SK-N-SH (cell line): ENCODE measurements at regions of chr12 and their contacts with region 1.

Region 1: DNA sequence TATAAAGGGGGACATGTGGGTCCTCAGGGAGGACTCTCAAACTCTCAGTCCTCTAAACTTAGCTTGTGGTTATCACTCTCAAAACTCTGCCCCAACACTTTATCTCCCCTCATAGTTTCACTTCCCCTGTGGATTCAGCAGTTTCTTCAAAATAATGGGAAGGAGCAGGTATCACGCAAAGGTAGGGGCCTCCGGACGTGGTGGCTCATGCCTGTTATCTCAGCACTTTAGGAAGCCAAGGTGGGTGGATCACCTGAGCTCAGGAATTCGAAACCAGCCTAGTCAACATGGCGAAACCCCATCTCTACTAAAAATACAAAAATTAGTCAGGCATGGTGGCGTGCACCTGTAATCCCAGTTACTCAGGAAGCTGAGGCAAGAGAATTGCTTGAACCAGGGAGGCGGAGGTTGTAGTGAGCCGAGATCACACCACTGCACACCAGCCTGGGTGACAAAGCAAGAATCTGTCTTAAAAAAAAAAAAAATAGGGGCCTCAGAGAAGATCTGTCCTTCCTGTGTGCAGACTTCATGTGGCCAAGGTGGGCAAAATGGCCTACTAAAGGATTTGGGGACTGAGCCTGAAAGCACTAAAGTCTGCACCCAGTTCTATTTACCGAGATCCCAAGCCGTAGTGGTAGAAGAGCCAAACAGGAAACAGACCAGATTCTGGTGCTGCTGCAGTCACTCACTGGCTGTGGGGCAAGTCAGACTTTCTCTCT is 6.4 kb downstream of the ITGB7 start:
- DNase-seq: no peak
- H3K4me3 ChIP-seq: no peak overlapping the region
- H3K27ac ChIP-seq: peak overlapping the region in 1 of 2 experiments; percentile 46; a peak in 1 of 4 replicates
- H3K4me1 ChIP-seq: no peaks in the 10 kb centered on the region
- H3K27me3 ChIP-seq: no peaks in the 10 kb centered on the region
- CTCF ChIP-seq: no peak
- EP300 ChIP-seq: no peak
- RAD21 ChIP-seq: no peak

Region 2: GRCh38 chr12:53174881-53175491 is 25.6 kb before region 1 on chr12:
- CTCF ChIA-PET with region 1: interaction called, 40 read pairs
- POLR2A ChIA-PET with region 1: no interaction called
- DNase-seq: no peak
- H3K4me3 ChIP-seq: no peak overlapping the region
- H3K27ac ChIP-seq: peak overlapping the region in 1 of 2 experiments; percentile 3; a peak in 2 of 4 replicates
- H3K4me1 ChIP-seq: peaks cover 19 to 22% of the 10 kb centered on the region in 2 experiments; a peak in 3 of 4 replicates
- H3K27me3 ChIP-seq: no peaks in the 10 kb centered on the region
- CTCF ChIP-seq: peak; percentile 53
- EP300 ChIP-seq: no peak
- RAD21 ChIP-seq: peak; percentile 52

Region 3: GRCh38 chr12:53180220-53180930 is 20.2 kb before region 1 on chr12 and contains the starts of genes CSAD and ZNF740:
- CTCF ChIA-PET with region 1: interaction called, 40 read pairs
- POLR2A ChIA-PET with region 1: no interaction called
- DNase-seq: peak; percentile 98
- H3K4me3 ChIP-seq: peak within 1 kb of the TSS; percentile 77 to 78
- H3K27ac ChIP-seq: peak within 1 kb of the TSS; percentile 89 to 97
- H3K4me1 ChIP-seq: peaks cover 17 to 27% of the 10 kb centered on the region in 2 experiments; a peak in 3 of 4 replicates
- H3K27me3 ChIP-seq: no peaks in the 10 kb centered on the region
- CTCF ChIP-seq: no peak
- EP300 ChIP-seq: 0 out of 4 replicates have a peak, but pooled peaks of 1 of the 2 experiments have one; percentile 6
- RAD21 ChIP-seq: no peak
- polyA plus RNA-seq, gene CSAD: 32.2 and 45.4 TPM in 2 replicates
- polyA plus RNA-seq, gene ZNF740: 14.6 and 21.8 TPM in 2 replicates

Region 4: DNA sequence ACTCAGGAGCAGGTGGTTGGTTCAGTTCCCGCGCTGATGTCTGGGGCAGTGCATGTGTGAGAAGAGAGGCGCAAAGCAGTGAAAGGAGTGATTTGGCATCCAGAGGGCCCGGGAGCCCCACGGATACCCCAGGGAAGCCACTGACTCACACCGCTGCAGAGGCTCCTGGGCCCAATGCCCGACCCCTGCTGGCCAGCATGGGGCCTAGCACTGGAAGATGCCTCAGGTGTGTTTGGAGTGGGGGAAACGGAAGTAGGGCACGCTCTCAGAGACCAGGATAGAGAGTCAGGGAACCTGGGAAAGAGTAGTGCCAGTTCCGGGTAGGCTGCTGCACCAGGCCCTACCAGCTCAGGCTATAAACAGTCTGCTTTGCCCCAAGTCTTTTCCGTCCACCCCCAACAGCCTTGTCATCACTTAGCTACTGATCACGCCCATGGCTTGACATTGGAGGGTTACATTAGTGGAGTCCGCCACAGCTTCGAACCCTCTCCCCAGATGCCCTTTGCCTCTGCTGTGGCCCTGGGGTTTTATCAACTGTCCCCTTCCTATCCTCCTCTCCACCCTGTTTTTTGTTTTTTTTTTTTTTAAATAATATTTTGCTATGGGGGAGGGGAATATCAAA is 10.4 kb before region 1 on chr12:
- CTCF ChIA-PET with region 1: interaction called, 37 read pairs
- POLR2A ChIA-PET with region 1: no interaction called
- DNase-seq: peak; percentile 79
- H3K4me3 ChIP-seq: no peak overlapping the region
- H3K27ac ChIP-seq: no peak overlapping the region
- H3K4me1 ChIP-seq: peaks cover 0 to 12% of the 10 kb centered on the region in 2 experiments; a peak in 1 of 4 replicates
- H3K27me3 ChIP-seq: no peaks in the 10 kb centered on the region
- CTCF ChIP-seq: peak; percentile 73
- EP300 ChIP-seq: no peak
- RAD21 ChIP-seq: peak; percentile 51